ENCODE measurements at regions of chr5 and their contacts with region 1.

Region 1: DNA sequence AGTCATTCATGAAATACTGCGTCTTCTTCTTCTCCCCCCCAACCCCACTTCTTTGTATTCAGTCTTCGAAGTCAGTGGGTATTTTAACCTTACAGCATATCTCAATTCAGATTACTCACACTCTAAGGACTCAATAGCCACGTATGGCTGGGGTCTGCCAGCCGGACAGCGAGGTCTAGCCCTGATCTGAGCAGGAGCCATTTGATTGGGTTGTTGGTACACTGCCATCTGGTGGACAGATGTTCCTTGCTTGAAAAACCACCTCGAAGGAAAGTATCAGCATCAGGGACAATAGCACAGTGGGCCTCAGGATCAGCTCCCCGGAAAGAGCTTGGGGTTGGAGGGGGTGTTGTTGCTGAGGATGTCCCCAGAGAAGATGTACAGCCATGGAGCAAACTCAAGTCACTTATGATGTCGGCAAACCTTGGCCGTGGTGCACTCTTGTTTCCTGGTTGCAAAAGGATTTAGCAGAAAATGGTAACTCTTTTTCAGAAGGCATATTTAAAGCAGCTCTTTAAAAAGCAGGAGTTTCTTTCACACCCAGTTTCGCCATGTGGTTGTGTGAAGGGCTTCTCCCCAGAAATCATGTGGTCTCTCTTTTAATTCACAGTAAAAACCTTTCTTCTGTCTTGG is 31.7 kb upstream of the KCNMB1 start:
- DNase-seq: no peak
- ATAC-seq: peak; percentile 58
- H3K4me3 Mint-ChIP-seq: no peak overlapping the region
- H3K27ac Mint-ChIP-seq: no peak overlapping the region
- H3K4me1 Mint-ChIP-seq: peaks cover 4% of the 10 kb centered on the region
- H3K27me3 Mint-ChIP-seq: peaks cover 23% of the 10 kb centered on the region
- CTCF ChIP-seq: peak; percentile 35

Region 2: DNA sequence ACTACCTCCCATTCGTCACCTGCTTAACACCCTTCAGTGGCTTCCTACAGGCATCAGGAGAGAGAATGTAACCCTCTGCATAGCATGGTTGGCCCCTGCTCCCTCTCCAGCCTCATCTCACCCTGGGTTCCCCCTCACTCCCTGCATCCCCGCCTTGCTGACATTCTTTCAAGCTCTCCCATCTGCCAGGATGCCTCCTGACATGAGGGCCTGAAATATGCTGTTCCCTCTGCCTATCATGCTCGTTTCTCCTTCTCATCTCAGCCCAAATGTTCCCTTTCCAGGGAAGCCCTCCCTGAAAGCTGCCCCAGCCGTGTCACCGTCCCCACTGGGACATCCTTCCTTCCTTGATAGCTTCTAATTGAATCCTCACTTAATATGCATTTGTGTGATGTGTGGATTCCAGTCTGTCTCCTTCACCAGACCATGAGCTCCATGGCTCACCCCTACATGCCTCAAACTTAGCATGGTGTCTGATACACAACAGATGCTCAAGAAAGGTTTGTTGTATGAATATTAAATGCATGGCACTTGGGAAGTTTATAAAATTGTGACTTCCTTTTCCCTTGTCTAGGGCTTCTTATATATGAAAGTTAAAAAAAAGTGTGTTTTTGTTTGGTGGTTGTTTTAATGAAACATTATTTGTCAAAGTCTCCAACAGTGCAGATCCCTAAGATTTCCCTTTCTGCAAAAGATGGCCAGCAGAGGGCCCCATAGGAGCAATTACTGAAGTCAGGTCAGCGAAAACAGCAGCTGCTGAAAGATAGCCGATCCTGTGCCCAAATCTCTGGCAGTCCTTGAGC is 195.4 kb before region 1 on chr5:
- CTCF ChIA-PET with region 1: interaction called, 95 read pairs
- POLR2A ChIA-PET with region 1: no interaction called
- intact Hi-C with region 1: loop called (anchors 1 kb)
- DNase-seq: no peak
- ATAC-seq: peak; percentile 49
- H3K4me3 Mint-ChIP-seq: no peak overlapping the region
- H3K27ac Mint-ChIP-seq: no peak overlapping the region
- H3K4me1 Mint-ChIP-seq: no peaks in the 10 kb centered on the region
- H3K27me3 Mint-ChIP-seq: no peaks in the 10 kb centered on the region
- CTCF ChIP-seq: peak; percentile 83

Region 3: GRCh38 chr5:170338933-170339779 is 81.7 kb before region 1 on chr5:
- CTCF ChIA-PET with region 1: interaction called, 8 read pairs
- POLR2A ChIA-PET with region 1: no interaction called
- intact Hi-C with region 1: loop called (anchors 1 kb)
- DNase-seq: peak; percentile 35
- ATAC-seq: peak; percentile 90
- H3K4me3 Mint-ChIP-seq: no peak overlapping the region
- H3K27ac Mint-ChIP-seq: no peak overlapping the region
- H3K4me1 Mint-ChIP-seq: peaks cover 20% of the 10 kb centered on the region
- H3K27me3 Mint-ChIP-seq: no peaks in the 10 kb centered on the region
- CTCF ChIP-seq: peak; percentile 48

Region 4: GRCh38 chr5:170357955-170358444 is 62.9 kb before region 1 on chr5:
- CTCF ChIA-PET with region 1: no interaction called
- POLR2A ChIA-PET with region 1: no interaction called
- intact Hi-C with region 1: loop called (anchors 5 kb)
- DNase-seq: no peak
- ATAC-seq: peak; percentile 31
- H3K4me3 Mint-ChIP-seq: no peak overlapping the region
- H3K27ac Mint-ChIP-seq: no peak overlapping the region
- H3K4me1 Mint-ChIP-seq: peaks cover 11% of the 10 kb centered on the region
- H3K27me3 Mint-ChIP-seq: peaks cover 18% of the 10 kb centered on the region
- CTCF ChIP-seq: no peak

Region 5: GRCh38 chr5:171961117-171961516 is 1540.2 kb after region 1 on chr5:
- CTCF ChIA-PET with region 1: no interaction called
- POLR2A ChIA-PET with region 1: no interaction called
- intact Hi-C with region 1: no loop called
- DNase-seq: no peak
- ATAC-seq: peak; percentile 45
- H3K4me3 Mint-ChIP-seq: no peak overlapping the region
- H3K27ac Mint-ChIP-seq: peak overlapping the region; percentile 61
- H3K4me1 Mint-ChIP-seq: peaks cover 92% of the 10 kb centered on the region
- H3K27me3 Mint-ChIP-seq: no peaks in the 10 kb centered on the region
- CTCF ChIP-seq: no peak